HCT116 (cell line): ENCODE measurements at regions of chr10 and their contacts with region 1.

Region 1: DNA sequence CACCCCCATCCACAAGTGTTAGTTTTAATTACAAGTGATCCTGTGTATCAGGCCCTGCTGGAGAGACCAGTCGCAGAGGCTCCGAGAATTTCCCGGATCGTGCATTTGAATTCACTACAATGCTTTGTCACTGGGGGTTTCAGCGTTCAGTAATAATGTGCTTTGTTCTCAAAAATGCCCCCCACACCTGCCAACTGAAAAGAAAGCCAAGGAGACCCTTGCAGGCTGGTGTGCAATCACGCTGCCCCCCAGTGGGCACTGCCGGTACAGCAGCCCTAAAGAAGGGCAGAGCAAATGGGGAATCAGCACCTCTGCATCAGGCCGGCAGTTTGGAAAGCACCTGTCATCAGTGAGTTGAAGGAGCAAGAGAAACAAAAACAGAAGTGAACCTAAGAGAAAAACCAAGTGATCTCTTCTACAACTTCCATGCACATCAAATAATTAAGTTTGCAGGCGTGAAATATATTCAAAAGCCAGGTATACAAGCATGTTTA is 177.6 kb downstream of the PARD3 start:
- DNase-seq: peak; percentile 10
- ATAC-seq: peak; percentile 71
- H3K4me3 ChIP-seq: no peak overlapping the region
- H3K27ac ChIP-seq: no peak overlapping the region
- H3K4me1 ChIP-seq: no peaks in the 10 kb centered on the region
- H3K27me3 ChIP-seq: no peaks in the 10 kb centered on the region
- CTCF ChIP-seq: peak; percentile 66 to 99 (median 99)
- POLR2A ChIP-seq: no peak
- RAD21 ChIP-seq: peak; percentile 82

Region 2: GRCh38 chr10:33193057-33193700 is 1444.3 kb before region 1 on chr10:
- CTCF ChIA-PET with region 1: interaction called, 14 read pairs
- POLR2A ChIA-PET with region 1: no interaction called
- RAD21 ChIA-PET with region 1: no interaction called
- intact Hi-C with region 1: loop called (anchors 1 kb)
- DNase-seq: peak; percentile 78
- ATAC-seq: peak; percentile 99
- H3K4me3 ChIP-seq: peak overlapping the region in 1 of 2 experiments; percentile 11; a peak in 1 of 4 replicates
- H3K27ac ChIP-seq: no peak overlapping the region
- H3K4me1 ChIP-seq: peaks cover 0 to 4% of the 10 kb centered on the region in 2 experiments; a peak in 1 of 4 replicates
- H3K27me3 ChIP-seq: no peaks in the 10 kb centered on the region
- CTCF ChIP-seq: peak; percentile 64 to 87 (median 81); a peak in 5 of 6 replicates
- POLR2A ChIP-seq: no peak
- RAD21 ChIP-seq: peak; percentile 89

Region 3: GRCh38 chr10:34081948-34082347 is 555.5 kb before region 1 on chr10:
- CTCF ChIA-PET with region 1: interaction called, 11 read pairs
- POLR2A ChIA-PET with region 1: no interaction called
- RAD21 ChIA-PET with region 1: no interaction called
- intact Hi-C with region 1: no loop called
- DNase-seq: no peak
- ATAC-seq: peak; percentile 47; the same call in 1 of the 2 replicates
- H3K4me3 ChIP-seq: no peak overlapping the region
- H3K27ac ChIP-seq: no peak overlapping the region
- H3K4me1 ChIP-seq: no peaks in the 10 kb centered on the region
- H3K27me3 ChIP-seq: no peaks in the 10 kb centered on the region
- CTCF ChIP-seq: peak; percentile 21 to 46 (median 39); a peak in 5 of 6 replicates
- POLR2A ChIP-seq: no peak
- RAD21 ChIP-seq: peak; percentile 52

Region 4: GRCh38 chr10:34407324-34407805 is 230.1 kb before region 1 on chr10:
- CTCF ChIA-PET with region 1: no interaction called
- POLR2A ChIA-PET with region 1: no interaction called
- RAD21 ChIA-PET with region 1: no interaction called
- intact Hi-C with region 1: loop called (anchors 10 kb)
- DNase-seq: no peak
- ATAC-seq: peak; percentile 44
- H3K4me3 ChIP-seq: no peak overlapping the region; a peak in 1 of 4 replicates
- H3K27ac ChIP-seq: no peak overlapping the region
- H3K4me1 ChIP-seq: peaks cover 34 to 51% of the 10 kb centered on the region in 2 experiments
- H3K27me3 ChIP-seq: no peaks in the 10 kb centered on the region
- CTCF ChIP-seq: no peak
- POLR2A ChIP-seq: no peak
- RAD21 ChIP-seq: no peak

Region 5: GRCh38 chr10:34528320-34528719 is 109.1 kb before region 1 on chr10:
- CTCF ChIA-PET with region 1: interaction called, 11 read pairs
- POLR2A ChIA-PET with region 1: no interaction called
- RAD21 ChIA-PET with region 1: interaction called in 1 of 2 experiments, 4 read pairs
- intact Hi-C with region 1: loop called (anchors 1 kb)
- DNase-seq: peak; percentile 92
- ATAC-seq: peak; percentile 93
- H3K4me3 ChIP-seq: peak overlapping the region in 1 of 2 experiments; percentile 25; a peak in 1 of 4 replicates
- H3K27ac ChIP-seq: peak overlapping the region; percentile 49
- H3K4me1 ChIP-seq: peaks cover 32 to 36% of the 10 kb centered on the region in 2 experiments
- H3K27me3 ChIP-seq: no peaks in the 10 kb centered on the region
- CTCF ChIP-seq: no peak
- POLR2A ChIP-seq: no peak
- RAD21 ChIP-seq: no peak

Region 6: GRCh38 chr10:34875061-34875460 is 237.6 kb after region 1 on chr10:
- CTCF ChIA-PET with region 1: no interaction called
- POLR2A ChIA-PET with region 1: no interaction called
- RAD21 ChIA-PET with region 1: no interaction called
- intact Hi-C with region 1: no loop called
- DNase-seq: no peak
- ATAC-seq: no peak
- H3K4me3 ChIP-seq: no peak overlapping the region
- H3K27ac ChIP-seq: no peak overlapping the region
- H3K4me1 ChIP-seq: no peaks in the 10 kb centered on the region
- H3K27me3 ChIP-seq: no peaks in the 10 kb centered on the region
- CTCF ChIP-seq: no peak
- POLR2A ChIP-seq: no peak
- RAD21 ChIP-seq: no peak